GM18951 (cell line): ENCODE measurements at regions of chr4 and their contacts with region 1.

Region 1: DNA sequence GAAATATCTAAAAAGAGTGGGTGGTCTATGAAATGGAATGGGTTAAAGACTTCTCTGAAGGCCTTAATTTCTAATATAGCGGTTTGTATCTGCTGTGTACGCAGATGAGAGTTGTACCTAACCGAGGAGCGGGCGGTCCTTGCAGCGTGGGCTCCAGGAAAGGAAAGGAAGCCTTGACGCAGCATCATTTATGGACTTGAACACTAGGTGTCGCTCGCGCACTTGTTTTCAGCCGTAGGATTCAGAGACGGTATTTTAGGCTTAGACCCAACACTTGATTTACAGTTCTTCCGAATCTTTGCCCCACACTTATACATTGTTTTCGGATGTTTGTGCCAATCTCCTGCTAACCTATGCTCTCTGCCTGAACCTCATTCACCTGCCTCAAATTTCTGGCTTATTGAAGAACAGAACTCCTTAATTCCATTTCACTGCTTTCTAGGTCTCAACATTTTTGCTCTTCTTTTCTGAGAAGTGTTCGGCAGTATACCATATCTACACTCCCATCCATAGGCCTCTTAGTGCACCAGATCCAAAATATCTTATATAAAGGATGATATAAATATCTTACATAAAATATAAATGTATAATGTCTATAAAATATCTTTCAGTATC is 48.9 kb upstream of the AADAT start:
- POLR2A ChIP-seq: no peak

Region 2: DNA sequence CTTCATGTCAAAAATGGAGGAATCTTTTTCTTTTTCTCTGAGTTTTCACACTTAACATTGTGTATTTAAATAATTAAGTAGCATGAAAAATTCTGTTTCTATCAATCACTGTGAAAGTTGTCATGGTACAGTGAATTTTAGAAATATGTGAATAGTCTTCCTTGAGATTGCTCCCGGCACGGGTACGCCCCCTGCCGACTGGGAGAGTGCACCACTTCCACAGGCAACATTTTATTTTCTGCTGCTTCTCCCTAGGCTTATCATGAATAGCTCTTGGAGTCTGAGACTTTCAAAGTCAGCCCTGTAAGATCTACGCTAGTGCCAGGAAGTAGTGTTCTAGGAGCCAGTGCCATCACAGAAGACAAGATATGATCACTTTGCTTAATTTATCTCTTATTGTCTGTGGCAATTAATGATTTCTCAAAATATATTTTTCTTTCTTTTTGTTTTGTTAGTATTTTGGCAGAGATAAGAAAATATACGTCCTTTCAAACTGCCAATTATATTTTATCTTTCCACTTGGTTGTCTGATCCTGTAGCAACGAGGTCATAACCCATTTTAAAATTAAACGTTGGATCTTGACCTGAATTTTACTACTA is 714.8 kb after region 1 on chr4:
- in situ Hi-C with region 1: loop called (anchors 25 kb)
- POLR2A ChIP-seq: no peak